ENCODE measurements at regions of chr2 and their contacts with region 1.

Region 1: GRCh38 chr2:127089478-127090235 is 17.3 kb downstream of the BIN1 start:
- DNase-seq: no peak
- ATAC-seq: no peak
- H3K4me3 Mint-ChIP-seq: no peak overlapping the region
- H3K27ac Mint-ChIP-seq: no peak overlapping the region
- H3K4me1 Mint-ChIP-seq: peaks cover 30% of the 10 kb centered on the region
- H3K27me3 Mint-ChIP-seq: no peaks in the 10 kb centered on the region
- CTCF ChIP-seq: no peak

Region 2: GRCh38 chr2:126543081-126543480 is 546.6 kb before region 1 on chr2:
- CTCF ChIA-PET with region 1: no interaction called
- POLR2A ChIA-PET with region 1: no interaction called
- intact Hi-C with region 1: no loop called
- DNase-seq: no peak
- ATAC-seq: no peak
- H3K4me3 Mint-ChIP-seq: no peak overlapping the region
- H3K27ac Mint-ChIP-seq: no peak overlapping the region
- H3K4me1 Mint-ChIP-seq: no peaks in the 10 kb centered on the region
- H3K27me3 Mint-ChIP-seq: peaks cover 2% of the 10 kb centered on the region
- CTCF ChIP-seq: no peak

Region 3: DNA sequence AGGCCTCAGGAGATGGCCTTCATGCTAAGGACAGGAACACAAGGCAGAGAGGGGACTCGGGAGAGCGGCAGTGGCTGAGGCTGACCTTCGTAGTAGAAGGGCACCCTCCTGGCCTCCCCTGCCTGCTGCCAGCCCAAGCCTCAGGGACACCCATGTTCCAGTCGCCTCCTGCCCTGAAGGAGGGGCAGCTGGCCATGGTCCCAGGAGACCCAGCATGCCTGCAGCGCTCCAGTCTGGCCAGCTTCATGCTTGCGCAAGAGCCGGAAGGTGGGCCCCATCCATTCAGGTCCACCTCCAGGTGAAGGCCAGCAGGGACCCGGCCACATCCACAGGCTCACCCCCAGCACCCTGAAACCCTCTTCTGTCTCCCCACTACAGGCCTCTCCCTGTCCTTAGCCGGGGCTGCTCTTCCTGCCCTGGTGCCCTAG is 17.7 kb before region 1 on chr2:
- CTCF ChIA-PET with region 1: interaction called, 15 read pairs
- POLR2A ChIA-PET with region 1: interaction called, 3 read pairs
- intact Hi-C with region 1: loop called (anchors 2 kb)
- DNase-seq: no peak
- ATAC-seq: no peak
- H3K4me3 Mint-ChIP-seq: no peak overlapping the region
- H3K27ac Mint-ChIP-seq: peak overlapping the region; percentile 52
- H3K4me1 Mint-ChIP-seq: peaks cover 40% of the 10 kb centered on the region
- H3K27me3 Mint-ChIP-seq: no peaks in the 10 kb centered on the region
- CTCF ChIP-seq: no peak